ENCODE measurements at regions of chr15 and their contacts with region 1.

Region 1: DNA sequence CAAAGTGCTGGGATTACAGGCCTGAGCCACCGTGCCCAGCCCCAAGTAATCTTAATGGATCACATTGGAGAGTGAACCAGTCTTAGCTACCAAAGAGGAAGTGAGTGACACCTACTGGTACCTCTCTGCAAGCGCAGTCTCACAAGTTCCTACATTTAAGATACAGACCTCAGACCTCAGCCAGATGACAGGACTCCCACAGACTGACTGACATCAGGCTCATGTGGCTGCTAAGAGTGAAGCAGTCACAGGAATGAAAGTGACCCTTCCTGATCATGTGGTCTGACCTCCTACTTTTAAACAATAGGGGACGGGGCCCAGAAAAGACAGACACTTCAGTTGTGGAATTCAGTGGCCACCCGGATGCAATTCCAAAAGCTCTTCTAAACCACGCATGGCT is 36.3 kb upstream of the GNB5 start:
- DNase-seq: peak; percentile 88
- ATAC-seq: peak; percentile 99
- H3K4me3 ChIP-seq: no peak overlapping the region
- H3K27ac ChIP-seq: no peak overlapping the region
- H3K4me1 ChIP-seq: no peaks in the 10 kb centered on the region
- H3K27me3 ChIP-seq: peaks cover 12% of the 10 kb centered on the region
- CTCF ChIP-seq: peak; percentile 75
- POLR2A ChIP-seq: no peak
- RAD21 ChIP-seq: peak; percentile 78

Region 2: DNA sequence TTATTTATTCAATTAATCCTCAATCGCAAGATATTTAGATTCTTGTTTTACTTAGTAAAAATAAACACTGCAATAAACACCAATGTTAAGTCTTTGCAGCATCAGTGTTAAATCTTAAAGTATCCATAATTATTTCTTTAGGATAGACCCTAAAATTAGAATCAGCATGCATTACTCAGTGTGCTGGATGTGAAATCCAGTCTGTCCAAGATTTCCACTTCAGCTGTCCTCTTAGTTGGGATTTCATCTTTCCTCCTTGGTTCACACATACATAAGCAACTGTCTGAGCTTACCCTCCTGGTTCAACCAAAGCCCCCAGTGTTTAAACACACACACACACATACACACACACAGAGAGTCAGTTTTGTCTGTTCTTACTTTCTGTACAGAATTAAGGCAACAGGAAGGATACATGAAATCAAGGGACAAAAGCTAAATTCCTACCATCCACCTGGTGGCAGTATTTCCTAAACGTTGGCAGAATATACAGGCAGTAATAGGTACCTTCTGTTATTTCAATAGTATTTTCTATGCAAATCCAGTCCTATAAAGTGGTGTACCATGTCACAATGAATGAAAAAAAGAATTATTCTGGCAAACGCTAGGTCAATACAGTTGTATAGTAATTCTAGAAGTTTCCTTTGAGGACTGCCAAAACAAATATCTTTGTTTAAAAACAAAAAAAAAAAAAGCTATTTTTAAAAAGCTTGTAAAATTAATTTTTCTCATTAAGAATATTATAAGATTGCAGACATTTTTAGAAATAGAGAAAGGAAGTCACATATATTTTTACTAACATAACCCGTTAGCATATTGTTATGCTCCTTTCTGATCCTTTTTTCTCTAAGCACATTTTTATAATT is 577.6 kb before region 1 on chr15:
- CTCF ChIA-PET with region 1: no interaction called
- POLR2A ChIA-PET with region 1: no interaction called
- dilution Hi-C with region 1: no loop called
- in situ Hi-C with region 1: no loop called
- intact Hi-C with region 1: loop called (anchors 5 kb)
- DNase-seq: peak; percentile 79
- ATAC-seq: peak; percentile 90
- H3K4me3 ChIP-seq: no peak overlapping the region
- H3K27ac ChIP-seq: no peak overlapping the region
- H3K4me1 ChIP-seq: no peaks in the 10 kb centered on the region
- H3K27me3 ChIP-seq: peaks cover 7% of the 10 kb centered on the region
- CTCF ChIP-seq: peak; percentile 94
- POLR2A ChIP-seq: no peak
- RAD21 ChIP-seq: peak; percentile 97

Region 3: GRCh38 chr15:51782357-51782896 is 445.0 kb before region 1 on chr15:
- CTCF ChIA-PET with region 1: no interaction called
- POLR2A ChIA-PET with region 1: no interaction called
- dilution Hi-C with region 1: no loop called
- in situ Hi-C with region 1: no loop called
- intact Hi-C with region 1: loop called (anchors 10 kb)
- DNase-seq: no peak
- ATAC-seq: no peak
- H3K4me3 ChIP-seq: no peak overlapping the region
- H3K27ac ChIP-seq: no peak overlapping the region
- H3K4me1 ChIP-seq: no peaks in the 10 kb centered on the region
- H3K27me3 ChIP-seq: no peaks in the 10 kb centered on the region
- CTCF ChIP-seq: peak; percentile 28; the same call in 1 of the 2 replicates
- POLR2A ChIP-seq: no peak
- RAD21 ChIP-seq: peak; percentile 45

Region 4: GRCh38 chr15:51888593-51889195 is 338.8 kb before region 1 on chr15:
- CTCF ChIA-PET with region 1: no interaction called
- POLR2A ChIA-PET with region 1: no interaction called
- dilution Hi-C with region 1: no loop called
- in situ Hi-C with region 1: no loop called
- intact Hi-C with region 1: loop called (anchors 5 kb)
- DNase-seq: peak; percentile 31
- ATAC-seq: no peak; the same call in 1 of the 2 replicates
- H3K4me3 ChIP-seq: no peak overlapping the region
- H3K27ac ChIP-seq: no peak overlapping the region
- H3K4me1 ChIP-seq: peaks cover 11% of the 10 kb centered on the region
- H3K27me3 ChIP-seq: no peaks in the 10 kb centered on the region
- CTCF ChIP-seq: peak; percentile 66
- POLR2A ChIP-seq: no peak
- RAD21 ChIP-seq: peak; percentile 51

Region 5: DNA sequence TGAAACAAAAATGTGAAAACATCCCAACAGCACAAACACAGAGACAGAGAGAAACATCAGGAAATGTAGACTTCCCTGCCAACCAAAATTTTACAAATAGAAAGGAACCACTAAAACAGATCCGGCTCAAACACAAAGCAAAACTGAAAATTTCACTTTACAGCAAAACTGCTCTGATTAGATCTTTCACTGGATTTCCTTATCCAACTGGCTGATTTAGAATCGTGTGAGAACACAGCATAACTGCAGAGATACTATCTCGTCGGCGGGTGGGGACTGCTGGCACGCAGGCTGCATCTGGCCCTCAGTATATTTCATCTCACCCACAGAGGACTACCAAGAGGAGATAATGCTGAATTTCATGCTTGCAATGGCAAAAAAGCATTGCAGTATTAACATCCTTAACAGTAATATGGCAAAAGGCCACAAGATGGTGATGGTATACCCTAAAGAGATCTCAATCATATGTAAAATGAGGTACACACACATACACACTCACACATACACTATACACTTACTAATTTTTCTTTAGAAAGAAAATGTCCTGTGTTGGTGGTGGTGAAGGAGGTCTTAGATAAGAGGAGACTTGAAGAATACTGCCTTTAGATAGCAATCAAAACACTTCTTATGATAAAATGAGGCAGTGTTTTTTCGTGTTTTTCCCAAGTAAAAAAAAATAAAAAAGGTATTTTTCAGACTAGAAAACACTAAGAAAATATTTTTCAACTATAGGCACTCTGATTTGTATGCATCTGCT is 245.3 kb before region 1 on chr15:
- CTCF ChIA-PET with region 1: no interaction called
- POLR2A ChIA-PET with region 1: no interaction called
- dilution Hi-C with region 1: no loop called
- in situ Hi-C with region 1: no loop called
- intact Hi-C with region 1: loop called (anchors 1 kb)
- DNase-seq: peak; percentile 82
- ATAC-seq: peak; percentile 89
- H3K4me3 ChIP-seq: no peak overlapping the region
- H3K27ac ChIP-seq: peak overlapping the region; percentile 9; the same call in 1 of the 2 replicates
- H3K4me1 ChIP-seq: peaks cover 3% of the 10 kb centered on the region
- H3K27me3 ChIP-seq: no peaks in the 10 kb centered on the region
- CTCF ChIP-seq: peak; percentile 82
- POLR2A ChIP-seq: 0 out of 2 replicates have a peak, but pooled peaks have one; percentile 35
- RAD21 ChIP-seq: peak; percentile 90

Region 6: GRCh38 chr15:52179278-52180195 is 47.9 kb before region 1 on chr15:
- CTCF ChIA-PET with region 1: interaction called, 5 read pairs
- POLR2A ChIA-PET with region 1: no interaction called
- dilution Hi-C with region 1: no loop called
- in situ Hi-C with region 1: no loop called
- intact Hi-C with region 1: loop called (anchors 2 kb)
- DNase-seq: peak; percentile 70
- ATAC-seq: peak; percentile 91
- H3K4me3 ChIP-seq: peak overlapping the region; percentile 97
- H3K27ac ChIP-seq: peak overlapping the region; percentile 92
- H3K4me1 ChIP-seq: peaks cover 2% of the 10 kb centered on the region; the same call in 1 of the 2 replicates
- H3K27me3 ChIP-seq: no peaks in the 10 kb centered on the region; the same call in 1 of the 2 replicates
- CTCF ChIP-seq: no peak
- POLR2A ChIP-seq: peak; percentile 60; the same call in 1 of the 2 replicates
- RAD21 ChIP-seq: no peak

Region 7: GRCh38 chr15:52217186-52217585 is 10.3 kb before region 1 on chr15:
- CTCF ChIA-PET with region 1: interaction called, 12 read pairs
- POLR2A ChIA-PET with region 1: no interaction called
- dilution Hi-C with region 1: no loop called
- in situ Hi-C with region 1: no loop called
- intact Hi-C with region 1: no loop called
- DNase-seq: no peak
- ATAC-seq: no peak
- H3K4me3 ChIP-seq: no peak overlapping the region
- H3K27ac ChIP-seq: no peak overlapping the region
- H3K4me1 ChIP-seq: peaks cover 1% of the 10 kb centered on the region; the same call in 1 of the 2 replicates
- H3K27me3 ChIP-seq: peaks cover 38% of the 10 kb centered on the region
- CTCF ChIP-seq: no peak
- POLR2A ChIP-seq: no peak
- RAD21 ChIP-seq: no peak

Measured in IMR-90 (cell line).